ENCODE measurements at regions of chr6 and their contacts with region 1.

Region 1: DNA sequence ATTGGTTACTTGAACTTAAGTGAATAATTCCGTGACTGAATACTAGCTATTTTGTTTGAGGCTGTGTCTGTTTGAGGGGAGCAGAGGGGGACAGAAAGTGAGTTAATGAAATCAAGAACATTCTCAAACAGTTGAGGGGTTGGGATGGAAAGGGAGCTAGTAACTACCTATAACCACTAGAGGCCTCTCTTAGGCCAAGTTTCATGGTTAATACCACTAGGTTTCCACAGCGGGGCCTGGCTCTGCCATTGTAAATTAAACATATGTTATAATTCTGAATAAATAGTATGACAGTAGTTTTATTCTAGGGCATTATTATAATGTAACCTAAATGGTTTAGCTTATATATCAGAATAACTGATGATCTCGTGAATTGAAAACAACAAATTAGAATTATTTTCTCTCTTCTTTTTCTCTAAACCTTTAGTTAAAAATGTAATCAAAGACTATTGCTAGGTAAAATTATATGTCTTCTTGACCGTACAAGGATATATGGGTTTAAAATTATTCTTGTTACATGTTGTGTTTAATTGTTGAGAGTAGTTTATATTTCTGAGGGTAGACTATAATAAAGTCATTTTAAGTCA is 108.1 kb downstream of the BCKDHB start:
- DNase-seq: peak; percentile 62
- H3K4me3 ChIP-seq: no peak overlapping the region
- H3K27ac ChIP-seq: no peak overlapping the region
- H3K4me1 ChIP-seq: no peaks in the 10 kb centered on the region
- H3K27me3 ChIP-seq: no peaks in the 10 kb centered on the region
- CTCF ChIP-seq: peak; percentile 55 to 74
- POLR2A ChIP-seq: no peak

Region 2: GRCh38 chr6:80338201-80338836 is 123.8 kb after region 1 on chr6:
- CTCF ChIA-PET with region 1: interaction called, 4 read pairs
- POLR2A ChIA-PET with region 1: no interaction called
- dilution Hi-C with region 1: no loop called
- intact Hi-C with region 1: loop called (anchors 2 kb)
- DNase-seq: peak; percentile 31
- H3K4me3 ChIP-seq: no peak overlapping the region
- H3K27ac ChIP-seq: no peak overlapping the region
- H3K4me1 ChIP-seq: peaks cover 4% of the 10 kb centered on the region
- H3K27me3 ChIP-seq: no peaks in the 10 kb centered on the region
- CTCF ChIP-seq: peak; percentile 64 to 69
- POLR2A ChIP-seq: no peak

Region 3: DNA sequence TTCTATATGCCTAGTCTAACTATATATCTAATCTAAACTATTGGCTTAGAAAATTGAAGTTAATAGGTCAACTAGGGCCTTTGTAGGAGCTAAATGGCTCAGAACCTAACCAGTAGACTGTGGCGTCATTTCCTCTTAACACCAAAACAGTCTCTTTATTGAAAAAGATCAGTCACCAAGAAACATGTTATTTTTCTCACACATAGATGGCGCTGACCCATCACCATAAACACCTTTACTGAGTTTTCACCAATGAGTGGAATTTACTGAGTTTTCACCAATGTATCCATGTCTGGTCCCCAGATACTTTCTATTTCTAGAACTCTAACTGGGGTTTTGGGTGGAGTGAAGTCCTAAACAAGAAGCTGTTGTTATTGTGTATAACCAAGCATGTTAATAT is 528.0 kb after region 1 on chr6:
- CTCF ChIA-PET with region 1: interaction called, 3 read pairs
- POLR2A ChIA-PET with region 1: no interaction called
- dilution Hi-C with region 1: no loop called
- intact Hi-C with region 1: loop called (anchors 10 kb)
- DNase-seq: peak; percentile 33
- H3K4me3 ChIP-seq: no peak overlapping the region
- H3K27ac ChIP-seq: no peak overlapping the region
- H3K4me1 ChIP-seq: no peaks in the 10 kb centered on the region
- H3K27me3 ChIP-seq: no peaks in the 10 kb centered on the region
- CTCF ChIP-seq: peak; percentile 31
- POLR2A ChIP-seq: no peak

Region 4: DNA sequence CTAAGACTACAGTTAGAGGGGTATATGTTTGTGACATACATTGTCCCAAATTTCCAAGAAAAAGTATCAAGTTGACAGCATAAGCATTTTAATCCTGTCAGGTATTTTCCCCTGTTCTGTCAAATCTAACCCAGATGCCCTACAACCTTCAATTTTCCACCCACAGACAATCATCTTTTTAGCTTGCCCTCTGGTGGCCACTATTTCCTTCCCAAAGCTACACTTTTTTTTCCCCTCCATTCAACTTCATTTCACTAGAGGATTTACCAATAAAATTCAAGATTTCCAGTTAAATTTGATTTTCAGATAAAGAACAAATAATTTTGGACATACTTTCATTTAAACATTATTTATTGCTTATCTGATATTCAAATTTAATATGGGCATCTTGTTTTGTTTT is 1251.3 kb after region 1 on chr6:
- CTCF ChIA-PET with region 1: interaction called, 20 read pairs
- POLR2A ChIA-PET with region 1: no interaction called
- dilution Hi-C with region 1: no loop called
- intact Hi-C with region 1: loop called (anchors 1 kb)
- DNase-seq: peak; percentile 19
- H3K4me3 ChIP-seq: no peak overlapping the region
- H3K27ac ChIP-seq: no peak overlapping the region
- H3K4me1 ChIP-seq: no peaks in the 10 kb centered on the region
- H3K27me3 ChIP-seq: no peaks in the 10 kb centered on the region
- CTCF ChIP-seq: peak; percentile 28 to 38
- POLR2A ChIP-seq: no peak